ENCODE measurements at regions of chr17 and their contacts with region 1.

Region 1: DNA sequence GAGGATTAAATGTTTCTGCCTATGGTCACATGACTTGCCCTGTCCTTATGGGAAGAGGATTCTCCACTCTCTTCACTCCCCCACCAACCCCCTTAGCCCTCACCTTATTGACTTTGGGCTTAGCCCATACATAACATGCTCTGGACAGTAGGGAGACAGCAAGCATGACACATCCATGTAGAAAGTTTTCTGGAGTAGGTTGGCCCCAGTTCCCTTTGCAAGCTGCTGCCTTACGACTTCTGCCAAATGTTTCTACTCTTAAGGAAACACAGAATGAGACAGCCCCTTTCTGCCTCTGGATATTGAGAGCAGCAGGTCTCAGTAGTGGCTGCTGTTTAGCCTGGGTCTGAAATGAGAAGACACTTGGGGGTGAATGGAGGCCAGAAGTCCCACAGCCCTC is 282.2 kb downstream of the MAP2K6 start:
- DNase-seq: no peak
- H3K4me3 ChIP-seq: no peak overlapping the region
- H3K27ac ChIP-seq: no peak overlapping the region
- H3K4me1 ChIP-seq: no peaks in the 10 kb centered on the region
- CTCF ChIP-seq: no peak

Region 2: GRCh38 chr17:69684251-69684650 is 12.4 kb before region 1 on chr17:
- CTCF ChIA-PET with region 1: no interaction called
- POLR2A ChIA-PET with region 1: interaction called, 11 read pairs
- intact Hi-C with region 1: no loop called
- DNase-seq: no peak
- H3K4me3 ChIP-seq: no peak overlapping the region
- H3K27ac ChIP-seq: no peak overlapping the region
- H3K4me1 ChIP-seq: no peaks in the 10 kb centered on the region
- CTCF ChIP-seq: no peak

Measured in OCI-LY7 (cell line).